Sigmoid colon (tissue), 7 donors: ENCODE measurements at regions of chr21 and their contacts with region 1.

Region 1: DNA sequence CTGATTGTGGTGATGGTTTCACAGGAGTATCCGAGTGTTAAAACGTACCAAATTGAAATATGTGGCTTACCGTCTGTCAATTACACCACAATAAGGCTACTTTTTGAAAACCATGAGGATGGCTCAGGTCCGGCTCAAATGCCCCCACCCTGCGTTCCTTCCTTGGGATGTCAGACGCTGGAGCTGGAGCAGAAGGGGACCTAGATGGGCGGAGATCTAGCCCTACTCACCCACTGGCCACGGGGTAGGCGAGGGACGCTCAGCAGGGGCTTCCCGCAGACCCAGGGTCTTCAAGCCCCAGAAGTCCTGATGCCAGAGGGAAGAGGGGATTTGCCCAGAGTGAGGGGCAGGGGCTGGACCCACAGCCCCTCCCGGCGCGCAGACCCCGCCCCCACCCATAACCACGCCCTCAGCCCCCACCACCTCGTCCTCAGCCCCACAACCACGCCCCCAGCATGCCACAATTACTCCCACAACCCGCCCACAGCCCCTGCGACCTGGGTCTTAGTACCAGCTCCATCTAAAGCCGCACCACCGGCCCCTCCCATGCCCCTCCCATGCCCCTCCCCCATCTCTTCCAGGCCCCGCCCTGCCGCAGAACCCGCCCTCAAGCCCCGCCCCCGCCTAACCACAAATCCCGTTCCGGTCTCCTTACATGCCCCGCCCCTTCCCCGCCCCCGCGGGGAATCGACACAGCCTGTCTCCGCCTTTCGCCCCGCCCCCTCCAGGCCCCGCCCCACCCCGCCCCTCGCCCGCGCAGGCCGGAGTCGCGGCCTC is at the start of gene LRRC3:
- DNase-seq: peak; percentile 95
- H3K4me3 ChIP-seq: peak within 1 kb of the TSS; percentile 63 to 94 (median 86)
- H3K27ac ChIP-seq: peak within 1 kb of the TSS; percentile 69 to 86 (median 74)
- H3K4me1 ChIP-seq: peaks cover 0 to 30% (median 16%) of the 10 kb centered on the region in 4 donors
- H3K27me3 ChIP-seq: no peaks in the 10 kb centered on the region
- CTCF ChIP-seq: no peak
- EP300 ChIP-seq: no peak
- POLR2A ChIP-seq: no peak
- total RNA-seq, gene LRRC3: 3.9 to 7.1 (median 5.4) TPM

Region 2: GRCh38 chr21:44011980-44012527 is 442.9 kb before region 1 on chr21 and contains the start of gene TRAPPC10:
- intact Hi-C with region 1: loop called (anchors 10 kb)
- DNase-seq: peak; percentile 92
- H3K4me3 ChIP-seq: peak within 1 kb of the TSS; percentile 71 to 99 (median 86)
- H3K27ac ChIP-seq: peak within 1 kb of the TSS; percentile 85 to 98 (median 98)
- H3K4me1 ChIP-seq: peaks cover 0 to 42% (median 29%) of the 10 kb centered on the region in 4 donors
- H3K27me3 ChIP-seq: no peaks in the 10 kb centered on the region
- CTCF ChIP-seq: no peak
- EP300 ChIP-seq: no peak
- POLR2A ChIP-seq: peak; percentile 61 to 69
- total RNA-seq, gene TRAPPC10: 18.7 to 26.6 (median 20.3) TPM

Region 3: DNA sequence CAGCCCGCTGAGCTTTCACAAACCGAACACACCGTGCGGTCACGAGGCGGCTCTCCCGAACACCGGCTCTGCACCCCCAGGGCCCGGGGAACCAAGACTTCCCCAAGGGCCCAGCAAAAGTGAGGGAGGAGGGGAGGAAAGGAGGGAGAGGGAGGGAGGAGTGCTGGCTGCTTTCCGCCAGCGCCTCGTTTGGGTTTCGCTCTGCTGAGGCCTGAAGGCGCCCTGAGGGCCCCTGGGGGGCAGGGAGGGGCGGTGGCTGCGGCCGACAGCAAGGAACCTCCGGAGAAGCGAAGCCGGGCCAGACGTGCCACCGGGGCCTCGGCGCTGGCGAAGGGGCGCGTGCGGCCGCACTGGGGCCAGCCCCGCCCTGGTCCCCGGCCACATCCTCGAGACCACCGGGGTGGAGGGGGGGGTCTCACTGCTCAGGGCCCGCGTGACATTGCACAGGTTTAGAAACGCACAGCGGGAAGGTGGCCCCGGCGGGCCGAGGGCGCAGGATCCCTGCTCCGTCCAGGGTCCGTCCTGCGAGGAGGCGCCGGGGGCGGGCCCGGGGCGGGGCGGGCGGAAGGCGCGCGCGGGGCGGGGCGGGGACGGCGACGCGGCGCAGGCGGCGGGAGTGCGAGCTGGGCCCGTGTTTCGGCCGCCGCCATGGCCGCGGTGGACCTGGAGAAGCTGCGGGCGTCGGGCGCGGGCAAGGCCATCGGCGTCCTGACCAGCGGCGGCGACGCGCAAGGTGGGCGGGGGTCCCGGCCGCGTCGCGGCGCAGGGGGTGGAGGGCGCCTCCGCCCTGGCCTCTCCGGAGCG is 155.3 kb before region 1 on chr21 and contains the start of gene PFKL:
- intact Hi-C with region 1: loop called (anchors 2 kb)
- DNase-seq: peak; percentile 81
- H3K4me3 ChIP-seq: peak within 1 kb of the TSS; percentile 80 to 96 (median 92)
- H3K27ac ChIP-seq: peak within 1 kb of the TSS; percentile 89 to 96 (median 92)
- H3K4me1 ChIP-seq: peaks cover 0 to 63% (median 51%) of the 10 kb centered on the region in 4 donors
- H3K27me3 ChIP-seq: peaks cover 0 to 25% (median 25%) of the 10 kb centered on the region in 3 donors
- CTCF ChIP-seq: no peak
- EP300 ChIP-seq: no peak
- POLR2A ChIP-seq: peak in 1 of 2 donors; percentile 33
- total RNA-seq, gene PFKL: 38.0 to 69.8 (median 50.4) TPM

Region 4: DNA sequence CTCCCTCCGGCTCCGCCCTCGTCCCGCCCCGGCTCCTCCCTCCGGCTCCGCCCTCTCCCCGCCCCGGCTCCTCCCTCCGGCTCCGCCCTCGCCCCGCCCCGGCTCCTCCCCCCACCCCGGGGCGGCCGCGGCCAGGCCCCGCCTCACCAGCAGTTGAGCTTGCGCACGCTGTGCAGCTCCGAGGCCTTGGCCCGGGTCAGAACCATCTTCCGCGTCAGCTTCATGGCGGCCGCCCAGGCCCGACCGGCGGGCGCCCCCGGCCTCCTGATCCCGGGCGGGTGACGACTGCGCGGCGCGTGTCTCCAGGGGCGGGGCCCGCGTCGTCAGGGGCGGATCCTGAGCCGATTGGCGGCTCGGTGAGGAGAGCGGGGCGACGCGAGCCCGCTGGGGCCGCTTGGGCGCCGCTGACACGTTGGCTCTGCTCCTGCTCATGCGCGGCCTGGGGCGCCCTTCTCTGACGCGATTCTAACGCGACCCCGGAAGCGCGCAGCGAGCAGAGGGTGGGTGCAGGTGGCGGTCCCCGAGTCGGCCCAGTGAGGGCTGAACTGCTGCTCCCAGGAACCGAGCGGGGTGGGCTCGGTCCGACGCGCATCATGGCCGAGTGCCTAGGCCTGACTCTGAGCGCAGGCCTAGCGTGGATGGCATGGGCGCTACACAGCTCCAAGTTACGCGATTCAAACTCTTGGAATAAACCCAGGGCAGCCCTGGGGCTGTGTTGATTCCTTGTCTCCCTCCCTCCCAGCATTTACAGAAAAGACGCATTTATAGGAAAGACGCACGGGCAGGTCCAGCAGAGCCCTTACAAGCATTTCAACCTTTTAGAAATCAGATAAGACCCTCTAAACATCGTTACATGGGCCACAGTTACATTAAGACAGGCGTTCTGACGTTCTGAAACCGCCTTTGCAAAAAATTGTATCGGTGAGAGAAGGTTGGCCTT is 115.7 kb before region 1 on chr21 and contains the start of gene CFAP410:
- intact Hi-C with region 1: loop called (anchors 2 kb)
- DNase-seq: peak; percentile 97
- H3K4me3 ChIP-seq: peak within 1 kb of the TSS; percentile 69 to 84 (median 76)
- H3K27ac ChIP-seq: peak within 1 kb of the TSS; percentile 93 to 99 (median 96)
- H3K4me1 ChIP-seq: peaks cover 0 to 22% (median 18%) of the 10 kb centered on the region in 4 donors
- H3K27me3 ChIP-seq: no peaks in the 10 kb centered on the region
- CTCF ChIP-seq: no peak
- EP300 ChIP-seq: peak in 1 of 4 donors; percentile 76
- POLR2A ChIP-seq: peak; percentile 94
- total RNA-seq, gene CFAP410: 25.8 to 31.1 (median 27.6) TPM

Region 5: GRCh38 chr21:44405948-44406872 is 48.7 kb before region 1 on chr21:
- intact Hi-C with region 1: no loop called
- DNase-seq: no peak
- H3K4me3 ChIP-seq: no peak overlapping the region
- H3K27ac ChIP-seq: no peak overlapping the region
- H3K4me1 ChIP-seq: no peaks in the 10 kb centered on the region
- H3K27me3 ChIP-seq: peaks cover 0 to 12% (median 0%) of the 10 kb centered on the region in 3 donors
- CTCF ChIP-seq: no peak
- EP300 ChIP-seq: no peak
- POLR2A ChIP-seq: no peak

Region 6: DNA sequence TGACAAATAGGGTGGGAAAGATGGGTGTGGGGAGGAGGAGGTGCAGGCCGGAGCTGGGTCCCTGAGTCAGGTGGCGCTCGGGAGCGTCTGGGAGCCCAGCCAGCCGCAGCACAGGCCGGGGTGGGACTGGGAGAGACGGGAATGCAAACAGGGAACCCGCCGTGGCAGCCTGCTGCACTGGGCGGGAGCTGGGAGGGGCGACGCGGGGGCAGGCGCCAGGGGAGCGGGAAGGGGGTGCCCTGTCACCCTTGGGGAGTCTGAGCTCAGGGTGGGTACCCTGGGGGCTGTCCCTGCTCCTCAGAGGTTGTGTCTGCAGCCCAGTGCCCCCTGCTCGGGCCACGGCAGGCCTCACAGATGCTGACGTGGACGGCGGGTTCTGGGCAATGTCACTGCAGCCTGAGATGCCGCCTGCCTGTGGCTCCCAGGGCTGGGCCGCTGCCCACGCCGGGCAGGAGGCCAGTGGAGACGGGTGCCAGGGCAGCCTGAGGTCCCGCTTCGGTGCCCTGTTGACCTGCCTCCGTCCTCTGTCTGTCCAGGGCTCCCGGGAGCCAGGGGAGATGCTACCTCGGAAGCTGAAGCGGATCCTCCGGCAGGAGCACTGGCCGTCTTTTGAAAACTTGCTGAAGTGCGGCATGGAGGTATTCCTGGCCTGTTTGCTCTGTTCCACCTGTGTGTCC is 16.3 kb before region 1 on chr21:
- intact Hi-C with region 1: loop called (anchors 2 kb)
- DNase-seq: peak; percentile 87
- H3K4me3 ChIP-seq: peak overlapping the region; percentile 14 to 42 (median 28)
- H3K27ac ChIP-seq: peak overlapping the region; percentile 53 to 81 (median 74)
- H3K4me1 ChIP-seq: peaks cover 0 to 32% (median 25%) of the 10 kb centered on the region in 4 donors
- H3K27me3 ChIP-seq: no peaks in the 10 kb centered on the region
- CTCF ChIP-seq: no peak
- EP300 ChIP-seq: peak in 3 of 4 donors; percentile 23 to 72 (median 54)
- POLR2A ChIP-seq: no peak

Region 7: GRCh38 chr21:45287438-45288391 is 832.8 kb after region 1 on chr21 and contains the start of gene POFUT2:
- intact Hi-C with region 1: no loop called
- DNase-seq: peak; percentile 99
- H3K4me3 ChIP-seq: peak within 1 kb of the TSS; percentile 68 to 96 (median 83)
- H3K27ac ChIP-seq: peak within 1 kb of the TSS; percentile 80 to 98 (median 96)
- H3K4me1 ChIP-seq: peaks cover 0 to 52% (median 39%) of the 10 kb centered on the region in 4 donors
- H3K27me3 ChIP-seq: no peaks in the 10 kb centered on the region
- CTCF ChIP-seq: no peak
- EP300 ChIP-seq: peak in 1 of 4 donors; percentile 46
- POLR2A ChIP-seq: peak; percentile 86 to 89
- total RNA-seq, gene POFUT2: 13.0 to 31.3 (median 20.9) TPM